IMR-90 (cell line): ENCODE measurements at regions of chr6 and their contacts with region 1.

Region 1: DNA sequence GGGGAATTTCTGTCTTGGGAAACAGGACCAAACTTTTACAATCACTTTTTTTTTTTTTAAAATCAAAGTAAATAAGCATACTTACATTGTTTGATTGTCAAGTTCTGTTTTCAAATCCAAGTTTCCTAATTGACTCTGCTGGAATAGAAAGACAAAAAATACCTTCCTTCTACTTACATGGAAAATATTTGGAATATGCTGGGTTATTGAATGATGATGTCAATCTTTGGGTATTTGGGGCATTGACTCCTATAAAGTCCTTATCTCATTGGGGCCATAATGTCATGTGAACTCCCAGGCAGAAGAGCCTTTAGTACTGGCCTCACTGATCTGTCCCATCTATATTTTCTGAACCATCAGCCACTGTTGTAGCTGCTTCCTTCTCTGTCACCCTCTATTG is 122.6 kb upstream of the NOX3 start:
- DNase-seq: peak; percentile 4
- ATAC-seq: no peak; the same call in 1 of the 2 replicates
- H3K4me3 ChIP-seq: no peak overlapping the region
- H3K27ac ChIP-seq: no peak overlapping the region
- H3K4me1 ChIP-seq: no peaks in the 10 kb centered on the region
- H3K27me3 ChIP-seq: no peaks in the 10 kb centered on the region
- CTCF ChIP-seq: no peak
- POLR2A ChIP-seq: no peak
- RAD21 ChIP-seq: no peak

Region 2: DNA sequence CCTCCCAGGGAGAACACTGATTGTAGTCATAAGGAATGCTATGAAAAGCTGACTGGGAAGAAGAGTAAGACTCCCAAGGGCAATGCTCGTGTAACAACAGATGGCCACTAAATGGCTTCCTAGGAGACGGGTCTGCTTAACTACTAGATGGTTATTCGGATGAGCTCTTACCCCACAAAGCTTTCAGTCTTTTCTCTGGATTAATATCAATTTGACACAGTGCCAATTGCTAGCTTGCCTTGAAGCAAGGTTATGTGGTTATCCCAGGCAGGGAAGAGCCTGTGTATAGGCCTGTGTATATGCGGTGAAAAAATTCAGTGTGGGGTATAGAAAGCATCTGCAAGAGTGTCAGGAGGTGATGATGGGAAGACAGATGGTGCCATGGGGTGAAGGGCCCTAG is 36.2 kb before region 1 on chr6:
- CTCF ChIA-PET with region 1: interaction called, 5 read pairs
- POLR2A ChIA-PET with region 1: no interaction called
- dilution Hi-C with region 1: no loop called
- in situ Hi-C with region 1: no loop called
- intact Hi-C with region 1: loop called (anchors 1 kb)
- DNase-seq: no peak
- ATAC-seq: no peak
- H3K4me3 ChIP-seq: no peak overlapping the region
- H3K27ac ChIP-seq: no peak overlapping the region
- H3K4me1 ChIP-seq: no peaks in the 10 kb centered on the region; the same call in 1 of the 2 replicates
- H3K27me3 ChIP-seq: no peaks in the 10 kb centered on the region
- CTCF ChIP-seq: no peak
- POLR2A ChIP-seq: no peak
- RAD21 ChIP-seq: no peak